ENCODE measurements at regions of chr1 and their contacts with region 1.

Region 1: GRCh38 chr1:201511941-201512539 is 5.1 kb upstream of the CSRP1 start:
- DNase-seq: no peak
- ATAC-seq: peak; percentile 15
- H3K4me3 ChIP-seq: no peak overlapping the region
- H3K27ac ChIP-seq: peak overlapping the region; percentile 63
- H3K4me1 ChIP-seq: peaks cover 25% of the 10 kb centered on the region
- H3K27me3 ChIP-seq: no peaks in the 10 kb centered on the region
- CTCF ChIP-seq: no peak
- POLR2A ChIP-seq: no peak
- RAD21 ChIP-seq: no peak

Region 2: GRCh38 chr1:201254625-201255506 is 257.2 kb before region 1 on chr1:
- CTCF ChIA-PET with region 1: no interaction called
- POLR2A ChIA-PET with region 1: no interaction called
- dilution Hi-C with region 1: no loop called
- in situ Hi-C with region 1: no loop called
- intact Hi-C with region 1: loop called (anchors 1 kb)
- DNase-seq: no peak
- ATAC-seq: peak; percentile 89
- H3K4me3 ChIP-seq: no peak overlapping the region
- H3K27ac ChIP-seq: no peak overlapping the region
- H3K4me1 ChIP-seq: peaks cover 4% of the 10 kb centered on the region
- H3K27me3 ChIP-seq: peaks cover 27% of the 10 kb centered on the region
- CTCF ChIP-seq: peak; percentile 94
- POLR2A ChIP-seq: peak; percentile 66
- RAD21 ChIP-seq: peak; percentile 99

Region 3: GRCh38 chr1:201419746-201420607 is 92.1 kb before region 1 on chr1:
- CTCF ChIA-PET with region 1: no interaction called
- POLR2A ChIA-PET with region 1: no interaction called
- dilution Hi-C with region 1: no loop called
- in situ Hi-C with region 1: no loop called
- intact Hi-C with region 1: no loop called
- DNase-seq: no peak
- ATAC-seq: no peak
- H3K4me3 ChIP-seq: no peak overlapping the region
- H3K27ac ChIP-seq: no peak overlapping the region
- H3K4me1 ChIP-seq: no peaks in the 10 kb centered on the region
- H3K27me3 ChIP-seq: peaks cover 57% of the 10 kb centered on the region
- CTCF ChIP-seq: no peak
- POLR2A ChIP-seq: no peak
- RAD21 ChIP-seq: no peak

Region 4: DNA sequence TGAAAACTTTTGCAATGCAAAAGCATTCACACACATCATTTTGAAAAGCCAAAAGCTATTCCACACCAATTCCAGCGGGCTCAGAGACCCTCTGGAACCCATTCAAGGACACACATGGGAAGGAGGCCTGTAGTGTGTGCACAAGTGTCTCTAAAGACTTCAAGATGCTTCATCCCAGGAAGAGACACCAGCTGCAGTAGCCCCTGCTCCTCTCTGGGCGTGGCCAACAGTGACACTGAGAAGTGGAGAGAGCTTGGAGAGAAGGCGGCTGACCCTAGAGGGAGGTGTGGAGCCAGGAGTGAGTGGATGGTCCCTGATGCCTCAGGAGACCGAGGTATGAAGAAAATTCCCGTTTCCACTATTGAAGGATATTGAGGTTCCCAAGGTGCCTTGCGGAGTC is 75.6 kb before region 1 on chr1:
- CTCF ChIA-PET with region 1: interaction called, 22 read pairs
- POLR2A ChIA-PET with region 1: no interaction called
- dilution Hi-C with region 1: no loop called
- in situ Hi-C with region 1: loop called (anchors 10 kb)
- intact Hi-C with region 1: loop called (anchors 1 kb)
- DNase-seq: peak; percentile 26
- ATAC-seq: peak; percentile 55
- H3K4me3 ChIP-seq: no peak overlapping the region
- H3K27ac ChIP-seq: no peak overlapping the region
- H3K4me1 ChIP-seq: no peaks in the 10 kb centered on the region
- H3K27me3 ChIP-seq: peaks cover 4% of the 10 kb centered on the region; the same call in 1 of the 2 replicates
- CTCF ChIP-seq: peak; percentile 22; the same call in 1 of the 2 replicates
- POLR2A ChIP-seq: no peak
- RAD21 ChIP-seq: peak; percentile 38

Region 5: GRCh38 chr1:201468844-201469511 is 43.1 kb before region 1 on chr1 and contains the start of gene PHLDA3:
- CTCF ChIA-PET with region 1: interaction called, 13 read pairs
- POLR2A ChIA-PET with region 1: interaction called, 7 read pairs
- dilution Hi-C with region 1: no loop called
- in situ Hi-C with region 1: no loop called
- intact Hi-C with region 1: loop called (anchors 5 kb)
- DNase-seq: peak; percentile 93
- ATAC-seq: peak; percentile 89
- H3K4me3 ChIP-seq: peak within 1 kb of the TSS; percentile 89
- H3K27ac ChIP-seq: peak within 1 kb of the TSS; percentile 93
- H3K4me1 ChIP-seq: peaks cover 14% of the 10 kb centered on the region
- H3K27me3 ChIP-seq: no peaks in the 10 kb centered on the region
- CTCF ChIP-seq: 0 out of 2 replicates have a peak, but pooled peaks have one; percentile 8
- POLR2A ChIP-seq: peak; percentile 95
- RAD21 ChIP-seq: peak; percentile 14
- total RNA-seq, gene PHLDA3: 41.6 and 44.2 TPM in 2 replicates

Region 6: DNA sequence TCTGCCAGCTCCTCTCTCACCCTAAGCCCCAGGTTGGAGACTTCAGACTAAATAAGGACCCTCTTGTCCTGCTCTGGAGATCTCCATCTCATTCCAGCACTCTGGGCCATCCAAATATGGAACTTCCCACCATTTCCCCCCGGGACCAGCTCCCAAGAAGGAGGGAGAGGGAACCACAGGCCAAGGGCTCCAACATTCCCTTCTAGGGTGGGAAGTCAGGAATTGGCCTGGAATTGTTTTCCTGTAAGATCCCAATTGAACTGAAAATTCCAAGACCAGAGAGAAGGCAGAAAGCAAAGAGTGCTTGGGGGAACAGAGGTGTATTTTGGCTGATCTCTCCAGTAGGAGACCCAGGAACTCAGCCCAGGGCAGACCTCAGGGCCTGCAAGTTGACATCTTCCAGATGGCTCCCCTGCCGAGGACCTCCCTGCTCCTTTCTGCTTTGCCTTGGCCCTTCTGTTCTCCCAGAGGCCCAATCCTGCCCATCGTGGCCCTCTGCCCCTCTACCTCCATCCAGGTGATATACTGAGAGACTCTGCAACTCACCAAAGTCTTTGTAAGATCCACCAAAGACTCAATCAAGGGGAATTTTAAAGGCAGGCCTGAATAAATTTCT is 20.0 kb before region 1 on chr1:
- CTCF ChIA-PET with region 1: interaction called, 10 read pairs
- POLR2A ChIA-PET with region 1: no interaction called
- dilution Hi-C with region 1: no loop called
- in situ Hi-C with region 1: no loop called
- intact Hi-C with region 1: no loop called
- DNase-seq: no peak
- ATAC-seq: no peak
- H3K4me3 ChIP-seq: no peak overlapping the region
- H3K27ac ChIP-seq: peak overlapping the region; percentile 38; the same call in 1 of the 2 replicates
- H3K4me1 ChIP-seq: peaks cover 68% of the 10 kb centered on the region
- H3K27me3 ChIP-seq: no peaks in the 10 kb centered on the region
- CTCF ChIP-seq: no peak
- POLR2A ChIP-seq: no peak
- RAD21 ChIP-seq: no peak

Region 7: GRCh38 chr1:201525197-201525778 is 13.2 kb after region 1 on chr1:
- CTCF ChIA-PET with region 1: interaction called, 12 read pairs
- POLR2A ChIA-PET with region 1: no interaction called
- dilution Hi-C with region 1: no loop called
- in situ Hi-C with region 1: no loop called
- intact Hi-C with region 1: no loop called
- DNase-seq: no peak
- ATAC-seq: no peak
- H3K4me3 ChIP-seq: no peak overlapping the region
- H3K27ac ChIP-seq: no peak overlapping the region
- H3K4me1 ChIP-seq: peaks cover 2% of the 10 kb centered on the region; the same call in 1 of the 2 replicates
- H3K27me3 ChIP-seq: no peaks in the 10 kb centered on the region
- CTCF ChIP-seq: no peak
- POLR2A ChIP-seq: no peak
- RAD21 ChIP-seq: no peak

Measured in IMR-90 (cell line).